Common myeloid progenitor, CD34-positive (primary cell): ENCODE measurements at regions of chr4 and their contacts with region 1.

Region 1: GRCh38 chr4:100093091-100093866 is 97.0 kb downstream of the DDIT4L start:
- DNase-seq: peak; percentile 91 to 96 (median 95)
- H3K4me3 ChIP-seq: no peak overlapping the region
- H3K27ac ChIP-seq: no peak overlapping the region
- H3K4me1 ChIP-seq: peaks cover 0 to 3% (median 1%) of the 10 kb centered on the region in 4 experiments
- H3K27me3 ChIP-seq: no peaks in the 10 kb centered on the region

Region 2: GRCh38 chr4:100106982-100107381 is 13.7 kb after region 1 on chr4:
- CTCF ChIA-PET with region 1: interaction called, 19 read pairs
- POLR2A ChIA-PET with region 1: no interaction called
- DNase-seq: peak; percentile 11 to 47 (median 39)
- H3K4me3 ChIP-seq: no peak overlapping the region
- H3K27ac ChIP-seq: no peak overlapping the region
- H3K4me1 ChIP-seq: peaks cover 0 to 11% (median under 1%) of the 10 kb centered on the region in 4 experiments
- H3K27me3 ChIP-seq: no peaks in the 10 kb centered on the region